SK-N-SH (cell line): ENCODE measurements at regions of chr7 and their contacts with region 1.

Region 1: GRCh38 chr7:82740246-82740848 is 296.8 kb upstream of the CACNA2D1 start:
- DNase-seq: peak; percentile 48
- H3K4me3 ChIP-seq: no peak overlapping the region; a peak in 1 of 4 replicates
- H3K27ac ChIP-seq: no peak overlapping the region
- H3K4me1 ChIP-seq: 0 out of 4 replicates have a peak, but pooled peaks cover 0 to 8% of the 10 kb centered on the region in 2 experiments
- H3K27me3 ChIP-seq: no peaks in the 10 kb centered on the region
- CTCF ChIP-seq: peak; percentile 93
- EP300 ChIP-seq: no peak
- RAD21 ChIP-seq: peak; percentile 91

Region 2: DNA sequence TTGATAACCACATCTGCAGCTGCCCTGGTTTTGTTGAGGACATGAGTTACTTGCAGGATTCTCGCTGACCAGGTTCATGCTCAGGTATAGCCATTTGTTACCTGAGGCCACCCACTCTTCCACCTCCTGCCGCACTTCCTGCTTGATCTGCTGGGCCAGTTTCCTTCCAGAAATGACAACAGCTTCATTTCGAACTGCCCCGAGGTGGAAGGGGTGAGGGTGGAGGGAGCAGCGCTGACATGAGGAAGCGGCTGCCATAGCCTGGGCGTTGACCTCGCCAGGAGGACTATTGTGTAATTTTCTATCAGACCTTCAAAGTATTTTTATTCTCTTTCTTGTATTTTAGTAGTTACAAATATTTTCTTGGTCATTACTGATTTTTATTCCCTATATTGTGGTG is 149.8 kb before region 1 on chr7:
- CTCF ChIA-PET with region 1: no interaction called
- POLR2A ChIA-PET with region 1: no interaction called
- DNase-seq: no peak
- H3K4me3 ChIP-seq: no peak overlapping the region
- H3K27ac ChIP-seq: no peak overlapping the region
- H3K4me1 ChIP-seq: peaks cover 0 to 6% of the 10 kb centered on the region in 2 experiments; a peak in 3 of 4 replicates
- H3K27me3 ChIP-seq: no peaks in the 10 kb centered on the region
- CTCF ChIP-seq: no peak
- EP300 ChIP-seq: no peak
- RAD21 ChIP-seq: no peak

Region 3: GRCh38 chr7:82755705-82756551 is 15.6 kb after region 1 on chr7:
- CTCF ChIA-PET with region 1: interaction called, 15 read pairs
- POLR2A ChIA-PET with region 1: no interaction called
- DNase-seq: no peak
- H3K4me3 ChIP-seq: no peak overlapping the region
- H3K27ac ChIP-seq: peak overlapping the region in 1 of 2 experiments; percentile 81; a peak in 3 of 4 replicates
- H3K4me1 ChIP-seq: peaks cover 0 to 21% of the 10 kb centered on the region in 2 experiments; a peak in 3 of 4 replicates
- H3K27me3 ChIP-seq: no peaks in the 10 kb centered on the region
- CTCF ChIP-seq: no peak
- EP300 ChIP-seq: peak in 1 of 2 experiments; percentile 47; a peak in 1 of 4 replicates
- RAD21 ChIP-seq: no peak

Region 4: GRCh38 chr7:83271212-83272099 is 531.1 kb after region 1 on chr7:
- CTCF ChIA-PET with region 1: interaction called, 52 read pairs
- POLR2A ChIA-PET with region 1: no interaction called
- DNase-seq: peak; percentile 40
- H3K4me3 ChIP-seq: no peak overlapping the region
- H3K27ac ChIP-seq: no peak overlapping the region
- H3K4me1 ChIP-seq: no peaks in the 10 kb centered on the region; a peak in 1 of 4 replicates
- H3K27me3 ChIP-seq: no peaks in the 10 kb centered on the region
- CTCF ChIP-seq: peak; percentile 67
- EP300 ChIP-seq: no peak
- RAD21 ChIP-seq: peak; percentile 91